Upper lobe of right lung (tissue), 1 donor: ENCODE measurements at regions of chr9 and their contacts with region 1.

Region 1: DNA sequence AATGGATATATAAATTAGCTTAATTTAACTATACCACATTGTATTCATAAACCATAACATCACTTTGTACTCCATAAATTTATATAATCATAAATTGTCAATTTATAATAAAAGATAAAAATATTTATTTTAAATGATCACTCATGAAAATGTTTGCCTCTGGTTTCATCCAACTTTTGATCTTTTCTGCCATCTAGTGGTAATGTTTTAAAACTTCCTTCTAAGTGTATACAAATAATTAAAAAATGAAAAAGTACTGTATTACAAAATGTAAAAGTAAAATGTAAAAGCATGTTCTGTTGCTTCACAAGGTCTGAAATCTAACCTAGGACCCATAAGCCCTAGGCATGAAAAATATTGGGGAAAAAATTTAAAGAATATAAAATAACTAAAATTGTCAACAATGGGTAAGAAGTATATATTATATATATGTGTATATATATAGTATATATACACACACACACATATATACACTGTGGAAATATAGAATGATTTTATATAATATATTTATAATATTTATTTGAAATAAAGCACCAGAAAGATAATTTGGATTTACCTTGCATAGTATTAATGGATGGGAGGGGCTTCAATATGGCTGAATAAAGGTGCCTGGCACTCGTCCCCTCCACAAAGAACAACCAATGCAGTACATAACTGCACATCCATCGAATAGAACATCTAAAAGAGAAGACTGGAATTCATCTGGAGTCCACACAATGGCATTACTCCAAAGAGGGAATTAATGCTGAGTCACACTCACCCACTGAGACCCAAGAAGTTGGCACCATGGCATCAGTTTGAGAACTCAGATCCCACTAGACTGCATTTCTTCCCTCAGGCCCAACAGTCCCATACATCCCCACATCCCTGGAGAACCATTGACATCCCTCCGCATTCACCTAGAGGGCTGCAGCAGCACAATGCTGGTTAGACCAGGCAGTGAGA is 32.5 kb downstream of the ANXA1 start:
- DNase-seq: no peak
- ATAC-seq: no peak
- H3K4me3 ChIP-seq: no peak overlapping the region
- H3K27ac ChIP-seq: no peak overlapping the region
- H3K4me1 ChIP-seq: no peaks in the 10 kb centered on the region
- H3K27me3 ChIP-seq: no peaks in the 10 kb centered on the region
- CTCF ChIP-seq: peak; percentile 69

Region 2: GRCh38 chr9:72856972-72857623 is 327.1 kb before region 1 on chr9:
- intact Hi-C with region 1: loop called (anchors 5 kb)
- DNase-seq: no peak
- ATAC-seq: peak; percentile 73
- H3K4me3 ChIP-seq: no peak overlapping the region
- H3K27ac ChIP-seq: no peak overlapping the region
- H3K4me1 ChIP-seq: peaks cover 9% of the 10 kb centered on the region
- H3K27me3 ChIP-seq: no peaks in the 10 kb centered on the region
- CTCF ChIP-seq: peak; percentile 66

Region 3: DNA sequence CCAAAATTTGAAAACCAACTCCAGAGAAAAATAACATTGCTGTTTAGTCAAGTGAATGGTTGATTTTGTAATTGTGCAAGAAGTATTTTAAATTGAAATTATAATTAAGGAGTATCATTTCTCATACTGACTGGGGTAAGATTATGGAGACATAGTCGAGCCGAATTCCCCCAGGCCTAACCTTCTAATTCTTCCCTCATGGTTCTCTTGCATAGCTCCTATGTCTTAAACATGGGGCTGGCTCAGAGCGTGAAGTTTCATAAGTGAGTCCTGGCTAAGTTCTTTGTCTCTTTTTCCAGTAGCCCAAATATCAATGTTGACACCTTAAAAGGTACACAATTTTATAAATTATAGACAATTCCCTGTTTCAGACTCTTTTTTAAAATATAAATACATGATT is 79.3 kb before region 1 on chr9:
- intact Hi-C with region 1: loop called (anchors 5 kb)
- DNase-seq: no peak
- ATAC-seq: no peak
- H3K4me3 ChIP-seq: no peak overlapping the region
- H3K27ac ChIP-seq: no peak overlapping the region
- H3K4me1 ChIP-seq: no peaks in the 10 kb centered on the region
- H3K27me3 ChIP-seq: no peaks in the 10 kb centered on the region
- CTCF ChIP-seq: no peak